Colonic mucosa (tissue), 4 donors: ENCODE measurements at regions of chr4 and their contacts with region 1.

Region 1: GRCh38 chr4:89906777-89907521 is 12.3 kb downstream of the MMRN1 start:
- DNase-seq: no peak
- H3K4me3 ChIP-seq: no peak overlapping the region
- H3K27ac ChIP-seq: no peak overlapping the region
- H3K4me1 ChIP-seq: no peaks in the 10 kb centered on the region
- H3K27me3 ChIP-seq: no peaks in the 10 kb centered on the region
- CTCF ChIP-seq: no peak

Region 2: DNA sequence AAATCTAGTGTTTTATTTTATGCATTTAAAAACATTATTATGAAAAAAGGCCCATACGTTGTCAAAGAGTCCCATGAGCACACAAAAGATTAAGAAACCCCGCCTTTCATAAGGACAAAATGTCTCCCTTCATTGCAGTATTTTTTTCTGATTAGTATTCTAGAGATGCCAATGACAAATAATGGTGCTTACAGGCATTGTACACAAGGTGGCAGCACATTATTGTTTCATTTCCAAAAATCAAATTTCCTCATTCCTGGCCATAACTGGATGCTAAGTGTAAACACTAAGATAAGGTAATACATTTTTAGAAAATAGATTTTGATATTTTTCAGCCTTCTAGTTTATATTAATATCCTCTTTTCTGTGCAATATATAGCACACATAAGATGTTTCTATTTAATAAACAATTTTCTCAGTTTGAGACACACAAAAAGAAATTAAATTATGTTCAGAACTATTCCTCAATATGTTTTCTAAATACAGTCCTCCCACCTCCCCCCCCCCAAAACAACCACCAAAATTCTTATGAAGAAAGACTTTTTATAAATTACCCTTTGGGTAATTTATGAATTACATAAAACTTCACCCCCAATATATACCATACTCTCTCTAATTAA is 748.0 kb before region 1 on chr4:
- intact Hi-C with region 1: loop called (anchors 10 kb)
- DNase-seq: no peak
- H3K4me3 ChIP-seq: no peak overlapping the region
- H3K27ac ChIP-seq: no peak overlapping the region
- H3K4me1 ChIP-seq: no peaks in the 10 kb centered on the region
- H3K27me3 ChIP-seq: no peaks in the 10 kb centered on the region
- CTCF ChIP-seq: peak; percentile 79

Region 3: DNA sequence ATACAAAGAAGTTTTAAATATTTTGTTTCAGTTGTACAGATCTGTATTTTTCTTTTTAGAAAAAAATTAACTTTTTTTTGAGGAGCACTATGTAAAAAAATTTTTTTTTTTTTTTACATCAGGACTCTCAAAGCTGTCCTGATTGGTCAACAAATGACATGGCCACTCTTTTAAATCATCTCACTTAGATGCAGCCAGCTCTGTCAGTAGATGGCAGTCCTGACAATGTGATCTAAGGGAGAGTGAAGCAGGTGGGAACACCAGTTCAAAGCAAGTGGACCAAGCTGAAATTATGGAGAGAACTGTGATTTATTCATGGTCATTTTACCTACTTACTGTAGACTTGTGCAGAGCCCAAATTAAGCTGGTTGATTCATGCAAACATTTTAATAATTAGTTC is 424.7 kb before region 1 on chr4:
- intact Hi-C with region 1: loop called (anchors 5 kb)
- DNase-seq: no peak
- H3K4me3 ChIP-seq: no peak overlapping the region
- H3K27ac ChIP-seq: no peak overlapping the region
- H3K4me1 ChIP-seq: no peaks in the 10 kb centered on the region
- H3K27me3 ChIP-seq: no peaks in the 10 kb centered on the region
- CTCF ChIP-seq: no peak

Region 4: DNA sequence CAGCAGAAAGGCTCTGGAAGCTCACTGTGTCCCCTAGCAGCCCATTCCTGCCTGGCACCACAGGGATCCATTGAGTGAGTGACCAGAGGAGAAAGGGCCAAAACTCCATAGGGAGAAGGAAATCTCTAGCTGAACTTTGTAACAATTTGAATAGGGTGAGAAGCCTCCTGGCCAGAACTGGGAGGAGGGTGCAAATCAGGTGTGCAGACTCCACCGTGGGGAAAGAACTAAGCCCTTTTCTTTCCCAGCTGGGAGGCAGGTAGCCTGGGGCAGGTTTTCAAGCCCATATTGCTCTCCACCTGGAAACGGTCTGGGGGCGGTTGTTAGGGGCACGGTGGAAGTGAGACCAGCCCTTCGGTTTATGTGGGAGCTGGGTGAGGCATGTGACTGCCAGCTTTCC is 297.2 kb before region 1 on chr4:
- intact Hi-C with region 1: loop called (anchors 10 kb)
- DNase-seq: no peak
- H3K4me3 ChIP-seq: no peak overlapping the region
- H3K27ac ChIP-seq: no peak overlapping the region
- H3K4me1 ChIP-seq: no peaks in the 10 kb centered on the region
- H3K27me3 ChIP-seq: no peaks in the 10 kb centered on the region
- CTCF ChIP-seq: no peak